ENCODE measurements at regions of chr5 and their contacts with region 1.

Region 1: DNA sequence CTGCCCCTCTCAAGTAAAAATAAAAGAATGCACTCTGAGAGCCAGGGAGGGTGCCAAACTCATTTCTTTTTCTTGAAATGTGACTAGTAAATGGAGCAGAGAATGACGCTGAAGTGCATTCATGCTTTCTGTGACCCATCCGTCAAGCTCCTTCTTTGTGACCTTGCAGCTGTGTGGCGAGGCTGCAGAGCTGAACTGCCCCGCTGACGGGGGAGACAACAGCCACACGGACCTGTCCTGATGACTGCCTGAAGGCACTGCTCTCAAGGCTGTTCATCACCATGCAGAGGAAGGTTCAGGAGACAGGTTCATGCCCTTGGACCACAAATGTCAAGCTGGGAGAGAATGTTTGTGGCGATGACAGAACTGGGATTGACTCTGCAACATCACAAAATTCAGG is 21.0 kb upstream of the RASGEF1C start:
- DNase-seq: no peak
- H3K4me3 Mint-ChIP-seq: no peak overlapping the region
- H3K27ac Mint-ChIP-seq: no peak overlapping the region
- H3K4me1 Mint-ChIP-seq: peaks cover 6% of the 10 kb centered on the region
- H3K27me3 Mint-ChIP-seq: no peaks in the 10 kb centered on the region
- CTCF ChIP-seq: no peak

Region 2: DNA sequence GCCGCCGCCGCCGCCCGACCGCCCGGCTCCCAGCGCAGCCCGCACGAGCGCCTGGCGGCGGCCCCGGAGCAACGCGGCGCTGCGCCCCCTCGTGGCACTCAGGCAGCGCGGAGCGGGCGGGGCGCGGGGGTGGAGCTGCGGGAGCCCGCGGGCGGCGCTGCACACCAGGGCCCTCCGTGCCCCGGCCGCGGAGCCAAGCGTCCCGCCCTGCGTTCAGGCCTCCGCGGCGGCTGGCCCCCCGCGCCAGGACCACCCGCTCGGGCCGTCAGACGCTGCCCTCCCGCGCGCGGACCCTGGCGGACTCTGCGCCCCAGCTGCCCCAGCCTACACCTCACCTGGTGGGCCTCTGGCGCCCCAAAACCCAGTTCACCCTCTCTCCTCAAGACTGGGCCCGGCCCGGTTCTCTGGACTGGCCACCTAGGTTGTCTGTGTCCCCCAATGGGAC is 20.9 kb before region 1 on chr5 and contains the start of gene RASGEF1C:
- CTCF ChIA-PET with region 1: interaction called, 12 read pairs
- POLR2A ChIA-PET with region 1: no interaction called
- intact Hi-C with region 1: no loop called
- DNase-seq: peak; percentile 72
- H3K4me3 Mint-ChIP-seq: peak within 1 kb of the TSS; percentile 66
- H3K27ac Mint-ChIP-seq: no peak within 1 kb of the TSS
- H3K4me1 Mint-ChIP-seq: peaks cover 12% of the 10 kb centered on the region
- H3K27me3 Mint-ChIP-seq: peaks cover 12% of the 10 kb centered on the region
- CTCF ChIP-seq: peak; percentile 49
- total RNA-seq, gene RASGEF1C: not detected in 2 replicates